HEK293 (cell line): ENCODE measurements at regions of chr11 and their contacts with region 1.

Region 1: DNA sequence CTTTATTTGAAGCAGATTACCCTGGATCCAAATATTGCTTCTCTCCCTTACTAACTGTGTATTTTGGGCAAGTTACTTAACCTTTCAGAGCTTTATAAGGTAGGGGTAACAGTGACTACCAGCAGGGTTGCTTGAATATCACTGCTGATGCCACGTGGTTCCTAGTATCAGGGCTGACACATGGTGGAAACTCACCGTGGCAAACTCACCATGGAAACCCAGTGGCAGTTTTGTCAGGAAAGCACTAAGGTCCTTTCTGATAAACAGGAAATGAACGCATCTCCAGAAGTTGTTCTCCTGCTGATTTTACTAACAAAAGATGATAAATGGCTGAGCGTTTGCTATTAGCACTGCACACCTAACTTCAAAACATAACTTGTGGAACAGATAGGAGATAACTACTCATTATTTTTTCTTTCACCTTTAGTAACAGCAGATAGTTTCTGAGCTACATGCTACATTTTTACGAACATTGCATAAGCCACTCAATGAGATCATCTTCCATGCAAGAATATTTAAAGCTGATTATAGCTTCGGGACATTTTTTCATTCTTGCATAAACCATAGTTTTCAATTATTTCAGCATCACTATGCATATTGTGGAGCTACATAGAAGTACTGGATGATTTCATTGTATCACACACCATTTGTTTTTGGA is 59.7 kb upstream of the RAG2 start:
- H3K4me3 ChIP-seq: no peak overlapping the region
- H3K27ac ChIP-seq: no peak overlapping the region
- H3K4me1 ChIP-seq: no peaks in the 10 kb centered on the region
- CTCF ChIP-seq: no peak

Region 2: GRCh38 chr11:36672813-36673450 is 15.2 kb after region 1 on chr11:
- CTCF ChIA-PET with region 1: interaction called, 11 read pairs
- POLR2A ChIA-PET with region 1: no interaction called
- H3K4me3 ChIP-seq: no peak overlapping the region
- H3K27ac ChIP-seq: no peak overlapping the region
- H3K4me1 ChIP-seq: no peaks in the 10 kb centered on the region
- CTCF ChIP-seq: no peak